IMR-90 (cell line): ENCODE measurements at regions of chr21 and their contacts with region 1.

Region 1: GRCh38 chr21:36122977-36123376 is 11.9 kb upstream of the CBR3 start:
- DNase-seq: no peak
- ATAC-seq: no peak
- H3K4me3 ChIP-seq: no peak overlapping the region
- H3K27ac ChIP-seq: no peak overlapping the region
- H3K4me1 ChIP-seq: peaks cover 8% of the 10 kb centered on the region
- H3K27me3 ChIP-seq: no peaks in the 10 kb centered on the region
- CTCF ChIP-seq: no peak
- POLR2A ChIP-seq: no peak
- RAD21 ChIP-seq: no peak

Region 2: GRCh38 chr21:35282944-35283343 is 840.0 kb before region 1 on chr21:
- CTCF ChIA-PET with region 1: no interaction called
- POLR2A ChIA-PET with region 1: interaction called, 19 read pairs
- dilution Hi-C with region 1: no loop called
- in situ Hi-C with region 1: no loop called
- intact Hi-C with region 1: no loop called
- DNase-seq: no peak
- ATAC-seq: no peak
- H3K4me3 ChIP-seq: no peak overlapping the region
- H3K27ac ChIP-seq: no peak overlapping the region
- H3K4me1 ChIP-seq: no peaks in the 10 kb centered on the region
- H3K27me3 ChIP-seq: no peaks in the 10 kb centered on the region
- CTCF ChIP-seq: no peak
- POLR2A ChIP-seq: no peak
- RAD21 ChIP-seq: no peak

Region 3: GRCh38 chr21:36149788-36150711 is 27.1 kb after region 1 on chr21:
- CTCF ChIA-PET with region 1: no interaction called
- POLR2A ChIA-PET with region 1: no interaction called
- dilution Hi-C with region 1: no loop called
- in situ Hi-C with region 1: no loop called
- intact Hi-C with region 1: no loop called
- DNase-seq: peak; percentile 54
- ATAC-seq: peak; percentile 78
- H3K4me3 ChIP-seq: no peak overlapping the region
- H3K27ac ChIP-seq: 0 out of 2 replicates have a peak overlapping the region, but pooled peaks have one; percentile 7
- H3K4me1 ChIP-seq: peaks cover 7% of the 10 kb centered on the region
- H3K27me3 ChIP-seq: no peaks in the 10 kb centered on the region
- CTCF ChIP-seq: no peak
- POLR2A ChIP-seq: no peak
- RAD21 ChIP-seq: no peak

Region 4: DNA sequence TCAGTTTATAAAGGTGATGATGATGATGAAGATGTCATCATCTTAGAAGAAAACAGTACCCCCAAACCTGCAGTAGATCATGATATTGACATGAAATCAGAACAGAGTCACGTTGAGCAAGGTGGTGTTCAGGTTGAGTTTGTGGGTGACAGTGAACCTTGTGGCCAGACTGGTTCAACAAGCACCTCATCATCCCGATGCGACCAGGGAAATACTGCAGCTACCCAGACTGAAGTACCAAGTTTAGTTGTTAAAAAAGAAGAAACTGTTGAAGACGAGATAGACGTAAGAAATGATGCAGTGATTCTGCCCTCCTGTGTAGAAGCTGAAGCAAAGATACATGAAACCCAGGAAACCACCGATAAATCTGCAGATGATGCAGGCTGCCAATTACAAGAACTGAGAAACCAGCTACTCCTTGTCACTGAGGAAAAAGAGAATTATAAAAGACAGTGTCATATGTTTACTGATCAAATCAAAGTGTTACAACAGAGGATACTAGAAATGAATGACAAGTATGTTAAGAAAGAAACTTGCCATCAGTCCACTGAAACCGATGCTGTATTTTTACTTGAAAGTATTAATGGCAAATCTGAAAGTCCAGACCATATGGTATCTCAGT is 246.2 kb after region 1 on chr21:
- CTCF ChIA-PET with region 1: no interaction called
- POLR2A ChIA-PET with region 1: no interaction called
- dilution Hi-C with region 1: no loop called
- in situ Hi-C with region 1: no loop called
- intact Hi-C with region 1: no loop called
- DNase-seq: no peak
- ATAC-seq: no peak
- H3K4me3 ChIP-seq: no peak overlapping the region
- H3K27ac ChIP-seq: no peak overlapping the region
- H3K4me1 ChIP-seq: no peaks in the 10 kb centered on the region
- H3K27me3 ChIP-seq: no peaks in the 10 kb centered on the region
- CTCF ChIP-seq: no peak
- POLR2A ChIP-seq: no peak
- RAD21 ChIP-seq: no peak